CD4-positive, alpha-beta T cell (primary cell): ENCODE measurements at regions of chr3 and their contacts with region 1.

Region 1: GRCh38 chr3:197906023-197906849 is 43.8 kb upstream of the RPL35A start:
- DNase-seq: peak; percentile 60 to 86 (median 66)
- ATAC-seq: peak; percentile 77
- H3K4me3 ChIP-seq: no peak overlapping the region
- H3K4me3 Mint-ChIP-seq: no peak overlapping the region
- H3K27ac ChIP-seq: no peak overlapping the region
- H3K27ac Mint-ChIP-seq: no peak overlapping the region
- H3K4me1 ChIP-seq: peaks cover 3% of the 10 kb centered on the region
- H3K4me1 Mint-ChIP-seq: peaks cover 9% of the 10 kb centered on the region
- H3K27me3 ChIP-seq: no peaks in the 10 kb centered on the region
- H3K27me3 Mint-ChIP-seq: no peaks in the 10 kb centered on the region
- CTCF ChIP-seq: peak; percentile 87

Region 2: GRCh38 chr3:196596355-196596754 is 1309.9 kb before region 1 on chr3:
- CTCF ChIA-PET with region 1: no interaction called
- POLR2A ChIA-PET with region 1: no interaction called
- intact Hi-C with region 1: no loop called
- DNase-seq: no peak
- ATAC-seq: no peak
- H3K4me3 ChIP-seq: no peak overlapping the region
- H3K4me3 Mint-ChIP-seq: no peak overlapping the region
- H3K27ac ChIP-seq: no peak overlapping the region
- H3K27ac Mint-ChIP-seq: no peak overlapping the region
- H3K4me1 ChIP-seq: peaks cover 4% of the 10 kb centered on the region
- H3K4me1 Mint-ChIP-seq: peaks cover 10% of the 10 kb centered on the region
- H3K27me3 ChIP-seq: peaks cover 0 to 3% of the 10 kb centered on the region in 2 experiments
- H3K27me3 Mint-ChIP-seq: no peaks in the 10 kb centered on the region
- CTCF ChIP-seq: no peak

Region 3: GRCh38 chr3:197942956-197943556 is 36.8 kb after region 1 on chr3:
- CTCF ChIA-PET with region 1: interaction called, 18 read pairs
- POLR2A ChIA-PET with region 1: no interaction called
- intact Hi-C with region 1: loop called (anchors 2 kb)
- DNase-seq: peak in 4 of 14 experiments; percentile 26 to 70 (median 60)
- ATAC-seq: peak; percentile 91
- H3K4me3 ChIP-seq: no peak overlapping the region
- H3K4me3 Mint-ChIP-seq: no peak overlapping the region
- H3K27ac ChIP-seq: no peak overlapping the region
- H3K27ac Mint-ChIP-seq: no peak overlapping the region
- H3K4me1 ChIP-seq: no peaks in the 10 kb centered on the region
- H3K4me1 Mint-ChIP-seq: no peaks in the 10 kb centered on the region
- H3K27me3 ChIP-seq: no peaks in the 10 kb centered on the region
- H3K27me3 Mint-ChIP-seq: no peaks in the 10 kb centered on the region
- CTCF ChIP-seq: peak; percentile 79